Left cardiac atrium (tissue), 4 donors: ENCODE measurements at regions of chr13 and their contacts with region 1.

Region 1: GRCh38 chr13:52669677-52670076 is 17.0 kb downstream of the SUGT1 start:
- DNase-seq: no peak
- ATAC-seq: no peak

Region 2: DNA sequence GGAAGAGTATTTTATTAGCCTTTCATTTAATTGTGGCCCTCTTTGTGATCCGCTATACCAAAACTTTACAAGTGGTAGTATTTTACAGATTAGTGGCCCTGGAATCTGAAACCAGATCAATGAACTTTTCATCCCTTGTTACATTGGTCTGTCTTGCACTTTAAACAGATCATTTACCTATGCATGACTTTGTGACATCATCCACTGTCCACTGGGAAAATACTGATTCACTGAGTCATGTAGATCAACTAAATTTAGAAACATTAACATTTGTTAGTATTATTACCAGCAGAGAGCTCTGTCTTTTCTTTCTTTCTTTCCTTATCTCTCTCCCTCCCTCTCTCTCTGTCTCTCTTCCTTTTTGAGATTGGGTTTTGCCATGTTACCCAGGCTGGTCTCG is 161.3 kb after region 1 on chr13:
- intact Hi-C with region 1: loop called in 1 of 2 experiments (anchors 10 kb)
- DNase-seq: no peak
- ATAC-seq: no peak